B cell (primary cell): ENCODE measurements at regions of chr15 and their contacts with region 1.

Region 1: GRCh38 chr15:51888593-51889195 is 59.2 kb downstream of the TMOD3 start:
- DNase-seq: peak; percentile 35
- ATAC-seq: no peak
- H3K4me3 ChIP-seq: no peak overlapping the region
- H3K4me3 Mint-ChIP-seq: no peak overlapping the region
- H3K27ac ChIP-seq: no peak overlapping the region
- H3K27ac Mint-ChIP-seq: no peak overlapping the region
- H3K4me1 ChIP-seq: no peaks in the 10 kb centered on the region
- H3K4me1 Mint-ChIP-seq: peaks cover 5% of the 10 kb centered on the region
- H3K27me3 ChIP-seq: no peaks in the 10 kb centered on the region
- H3K27me3 Mint-ChIP-seq: no peaks in the 10 kb centered on the region
- CTCF ChIP-seq: peak; percentile 92

Region 2: GRCh38 chr15:51782357-51782896 is 106.3 kb before region 1 on chr15:
- CTCF ChIA-PET with region 1: no interaction called
- POLR2A ChIA-PET with region 1: no interaction called
- intact Hi-C with region 1: no loop called
- DNase-seq: no peak
- ATAC-seq: no peak
- H3K4me3 ChIP-seq: no peak overlapping the region
- H3K4me3 Mint-ChIP-seq: no peak overlapping the region
- H3K27ac ChIP-seq: no peak overlapping the region
- H3K27ac Mint-ChIP-seq: no peak overlapping the region
- H3K4me1 ChIP-seq: no peaks in the 10 kb centered on the region
- H3K4me1 Mint-ChIP-seq: peaks cover 3% of the 10 kb centered on the region
- H3K27me3 ChIP-seq: no peaks in the 10 kb centered on the region
- H3K27me3 Mint-ChIP-seq: no peaks in the 10 kb centered on the region
- CTCF ChIP-seq: no peak

Region 3: DNA sequence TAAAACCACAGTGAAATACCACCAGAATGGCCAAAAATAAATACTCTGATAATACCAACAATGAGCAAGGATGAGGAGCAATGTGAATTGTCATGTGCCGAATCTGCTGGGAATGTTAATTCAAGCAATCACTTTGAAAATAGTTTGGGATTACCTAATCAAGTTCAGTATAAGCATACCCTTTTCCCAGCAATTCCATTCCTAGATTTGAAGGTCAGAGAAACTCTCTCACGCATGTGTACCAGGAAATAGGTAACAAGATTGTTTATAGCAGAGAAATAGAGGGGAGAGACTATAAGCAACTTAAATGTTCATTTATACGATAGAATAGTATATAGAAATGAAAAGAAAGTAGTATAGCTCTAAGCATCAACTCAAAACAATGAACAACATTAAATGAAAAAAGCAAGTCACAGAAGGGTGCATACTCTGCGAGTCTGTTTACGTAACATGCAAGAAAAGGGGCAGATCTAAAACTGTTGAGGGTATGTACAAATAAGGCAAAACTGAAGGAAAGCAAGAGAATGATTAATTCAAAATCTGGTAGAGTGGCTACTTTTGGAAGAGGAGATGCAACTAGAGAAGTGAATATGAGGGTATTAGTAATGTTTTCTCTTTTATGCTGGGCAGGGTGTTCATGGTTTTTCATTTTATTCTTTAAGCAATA is 31.8 kb before region 1 on chr15:
- CTCF ChIA-PET with region 1: interaction called, 11 read pairs
- POLR2A ChIA-PET with region 1: no interaction called
- intact Hi-C with region 1: no loop called
- DNase-seq: no peak
- ATAC-seq: no peak
- H3K4me3 ChIP-seq: no peak overlapping the region
- H3K4me3 Mint-ChIP-seq: no peak overlapping the region
- H3K27ac ChIP-seq: no peak overlapping the region
- H3K27ac Mint-ChIP-seq: no peak overlapping the region
- H3K4me1 ChIP-seq: peaks cover 7 to 15% of the 10 kb centered on the region in 2 donors
- H3K4me1 Mint-ChIP-seq: peaks cover 62% of the 10 kb centered on the region
- H3K27me3 ChIP-seq: no peaks in the 10 kb centered on the region
- H3K27me3 Mint-ChIP-seq: no peaks in the 10 kb centered on the region
- CTCF ChIP-seq: no peak

Region 4: GRCh38 chr15:51874751-51875528 is 13.8 kb before region 1 on chr15:
- CTCF ChIA-PET with region 1: interaction called, 20 read pairs
- POLR2A ChIA-PET with region 1: no interaction called
- intact Hi-C with region 1: no loop called
- DNase-seq: no peak
- ATAC-seq: no peak
- H3K4me3 ChIP-seq: no peak overlapping the region
- H3K4me3 Mint-ChIP-seq: no peak overlapping the region
- H3K27ac ChIP-seq: no peak overlapping the region
- H3K27ac Mint-ChIP-seq: no peak overlapping the region
- H3K4me1 ChIP-seq: no peaks in the 10 kb centered on the region
- H3K4me1 Mint-ChIP-seq: peaks cover 4% of the 10 kb centered on the region
- H3K27me3 ChIP-seq: no peaks in the 10 kb centered on the region
- H3K27me3 Mint-ChIP-seq: no peaks in the 10 kb centered on the region
- CTCF ChIP-seq: no peak

Region 5: DNA sequence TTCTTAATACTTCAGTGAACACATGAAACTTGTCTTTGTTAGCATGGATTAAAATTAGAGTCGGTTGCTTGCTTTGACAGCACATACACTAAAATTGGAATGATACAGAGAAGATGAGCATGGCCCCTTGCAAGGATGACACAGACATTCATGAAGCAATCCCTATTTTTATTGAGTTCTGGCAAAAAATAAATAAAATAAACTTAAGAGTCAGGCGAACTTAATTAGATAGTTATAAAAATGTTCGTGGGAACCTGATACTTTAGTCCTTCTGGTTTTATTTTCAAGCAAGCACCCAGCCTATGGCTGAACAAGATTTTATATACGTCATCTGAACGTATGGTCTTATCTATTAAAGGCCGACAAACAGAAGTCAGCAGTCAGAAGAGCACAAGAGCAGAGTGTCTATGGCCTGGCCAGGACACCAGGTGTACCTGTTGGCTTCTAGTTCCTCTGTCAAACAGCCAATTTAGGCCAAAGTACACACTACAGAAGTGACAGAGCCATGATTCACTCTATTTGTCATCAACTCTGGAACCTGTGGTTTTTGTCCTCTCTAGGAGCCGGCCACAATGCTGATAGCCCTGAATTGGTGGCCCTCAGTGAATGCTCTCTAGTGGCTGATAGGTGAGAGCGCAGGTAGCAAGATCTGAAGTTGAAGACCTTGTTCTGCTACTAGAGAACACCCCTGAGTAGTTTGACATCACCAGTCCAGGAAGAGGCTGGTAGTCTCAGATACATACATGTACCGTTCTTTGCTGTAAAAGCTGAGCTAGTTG is 18.6 kb after region 1 on chr15:
- CTCF ChIA-PET with region 1: interaction called, 12 read pairs
- POLR2A ChIA-PET with region 1: no interaction called
- intact Hi-C with region 1: no loop called
- DNase-seq: no peak
- ATAC-seq: no peak
- H3K4me3 ChIP-seq: no peak overlapping the region
- H3K4me3 Mint-ChIP-seq: no peak overlapping the region
- H3K27ac ChIP-seq: no peak overlapping the region
- H3K27ac Mint-ChIP-seq: no peak overlapping the region
- H3K4me1 ChIP-seq: no peaks in the 10 kb centered on the region
- H3K4me1 Mint-ChIP-seq: no peaks in the 10 kb centered on the region
- H3K27me3 ChIP-seq: no peaks in the 10 kb centered on the region
- H3K27me3 Mint-ChIP-seq: no peaks in the 10 kb centered on the region
- CTCF ChIP-seq: no peak